Naive thymus-derived CD8-positive, alpha-beta T cell (primary cell): ENCODE measurements at regions of chr19 and their contacts with region 1.

Region 1: GRCh38 chr19:13195678-13196077 is 45.5 kb downstream of the IER2 start:
- DNase-seq: peak in 5 of 10 donors; percentile 24 to 39 (median 34)
- ATAC-seq: peak in 1 of 2 donors; percentile 50
- H3K4me3 Mint-ChIP-seq: no peak overlapping the region
- H3K27ac Mint-ChIP-seq: peak overlapping the region in 8 of 10 donors; percentile 15 to 84 (median 60)
- H3K4me1 Mint-ChIP-seq: peaks cover 5 to 34% (median 20%) of the 10 kb centered on the region in 4 donors
- H3K27me3 Mint-ChIP-seq: no peaks in the 10 kb centered on the region

Region 2: GRCh38 chr19:13138916-13139198 is 56.8 kb before region 1 on chr19:
- POLR2A ChIA-PET with region 1: no interaction called
- DNase-seq: no peak
- ATAC-seq: no peak
- H3K4me3 Mint-ChIP-seq: no peak overlapping the region
- H3K27ac Mint-ChIP-seq: no peak overlapping the region
- H3K4me1 Mint-ChIP-seq: peaks cover 0 to 5% (median 2%) of the 10 kb centered on the region in 4 donors
- H3K27me3 Mint-ChIP-seq: no peaks in the 10 kb centered on the region

Region 3: GRCh38 chr19:13155472-13156359 is 40.0 kb before region 1 on chr19:
- POLR2A ChIA-PET with region 1: interaction called, 108 read pairs
- DNase-seq: peak; percentile 67 to 89 (median 78)
- ATAC-seq: peak; percentile 8 to 35
- H3K4me3 Mint-ChIP-seq: peak overlapping the region; percentile 93 to 99 (median 98)
- H3K27ac Mint-ChIP-seq: peak overlapping the region; percentile 97 to 100 (median 98)
- H3K4me1 Mint-ChIP-seq: peaks cover 35 to 59% (median 50%) of the 10 kb centered on the region in 4 donors
- H3K27me3 Mint-ChIP-seq: peaks cover 0 to 3% (median 0%) of the 10 kb centered on the region in 5 donors

Region 4: GRCh38 chr19:13181747-13182388 is 13.8 kb before region 1 on chr19:
- POLR2A ChIA-PET with region 1: interaction called, 12 read pairs
- DNase-seq: peak in 4 of 10 donors; percentile 19 to 58 (median 28)
- ATAC-seq: peak; percentile 60 to 78
- H3K4me3 Mint-ChIP-seq: peak overlapping the region; percentile 37 to 81 (median 66)
- H3K27ac Mint-ChIP-seq: peak overlapping the region; percentile 51 to 92 (median 80)
- H3K4me1 Mint-ChIP-seq: peaks cover 23 to 42% (median 36%) of the 10 kb centered on the region in 4 donors
- H3K27me3 Mint-ChIP-seq: no peaks in the 10 kb centered on the region

Region 5: GRCh38 chr19:13234518-13234917 is 38.8 kb after region 1 on chr19:
- POLR2A ChIA-PET with region 1: no interaction called
- DNase-seq: peak; percentile 30 to 89 (median 60)
- ATAC-seq: peak; percentile 89 to 98
- H3K4me3 Mint-ChIP-seq: peak overlapping the region; percentile 43 to 85 (median 68)
- H3K27ac Mint-ChIP-seq: peak overlapping the region in 9 of 10 donors; percentile 52 to 90 (median 78)
- H3K4me1 Mint-ChIP-seq: peaks cover 13 to 19% (median 16%) of the 10 kb centered on the region in 4 donors
- H3K27me3 Mint-ChIP-seq: peaks cover 0 to 4% (median 0%) of the 10 kb centered on the region in 5 donors

Region 6: DNA sequence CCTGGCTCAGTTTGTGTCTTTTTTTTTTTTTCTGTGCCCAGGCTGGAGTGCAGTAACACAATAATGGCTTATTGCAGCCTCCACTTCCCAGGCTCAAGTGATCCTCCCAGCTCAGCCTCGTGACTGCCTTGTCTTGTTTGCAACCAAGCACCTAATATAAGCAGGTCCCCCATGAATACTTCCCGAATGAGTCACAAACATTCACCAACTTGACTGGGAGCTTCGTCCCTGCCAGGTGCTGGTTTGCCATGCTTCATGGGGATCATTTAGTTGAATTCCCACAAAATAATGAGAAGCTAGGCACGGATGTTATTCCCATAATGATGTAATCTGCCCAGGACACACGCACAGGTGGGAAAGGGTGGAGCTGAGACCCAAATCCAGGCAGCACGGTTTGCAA is 134.1 kb after region 1 on chr19:
- POLR2A ChIA-PET with region 1: no interaction called
- DNase-seq: no peak
- ATAC-seq: no peak
- H3K4me3 Mint-ChIP-seq: no peak overlapping the region
- H3K27ac Mint-ChIP-seq: no peak overlapping the region
- H3K4me1 Mint-ChIP-seq: no peaks in the 10 kb centered on the region
- H3K27me3 Mint-ChIP-seq: peaks cover 15 to 36% (median 31%) of the 10 kb centered on the region in 5 donors